ENCODE measurements at regions of chr16 and their contacts with region 1.

Region 1: GRCh38 chr16:75471723-75472633 is 7.5 kb upstream of the TMEM170A start:
- DNase-seq: no peak
- ATAC-seq: peak; percentile 94

Region 2: DNA sequence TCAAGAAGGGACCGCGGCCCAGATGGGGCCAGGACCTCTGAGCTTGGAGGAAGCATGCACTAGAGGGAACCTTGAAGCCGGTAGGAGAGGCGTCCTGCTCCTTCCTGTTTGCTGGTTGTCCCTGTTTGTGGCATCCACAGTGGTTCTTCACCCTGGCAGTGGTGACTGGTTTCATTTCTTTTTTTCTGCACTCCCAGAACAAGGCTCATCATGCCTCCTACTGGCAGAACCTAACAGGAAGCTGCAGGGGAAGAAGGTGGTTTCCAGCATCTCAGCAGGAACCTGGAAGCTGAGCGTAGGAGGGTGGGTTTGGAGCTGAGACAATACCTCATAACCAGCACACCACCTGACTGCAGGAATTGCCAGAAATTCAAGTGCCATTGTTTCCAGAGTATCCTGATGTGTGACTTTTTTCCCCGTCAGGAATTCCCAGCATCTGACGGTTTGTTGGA is 78.3 kb after region 1 on chr16:
- intact Hi-C with region 1: loop called (anchors 2 kb)
- DNase-seq: no peak
- ATAC-seq: peak; percentile 44

Region 3: DNA sequence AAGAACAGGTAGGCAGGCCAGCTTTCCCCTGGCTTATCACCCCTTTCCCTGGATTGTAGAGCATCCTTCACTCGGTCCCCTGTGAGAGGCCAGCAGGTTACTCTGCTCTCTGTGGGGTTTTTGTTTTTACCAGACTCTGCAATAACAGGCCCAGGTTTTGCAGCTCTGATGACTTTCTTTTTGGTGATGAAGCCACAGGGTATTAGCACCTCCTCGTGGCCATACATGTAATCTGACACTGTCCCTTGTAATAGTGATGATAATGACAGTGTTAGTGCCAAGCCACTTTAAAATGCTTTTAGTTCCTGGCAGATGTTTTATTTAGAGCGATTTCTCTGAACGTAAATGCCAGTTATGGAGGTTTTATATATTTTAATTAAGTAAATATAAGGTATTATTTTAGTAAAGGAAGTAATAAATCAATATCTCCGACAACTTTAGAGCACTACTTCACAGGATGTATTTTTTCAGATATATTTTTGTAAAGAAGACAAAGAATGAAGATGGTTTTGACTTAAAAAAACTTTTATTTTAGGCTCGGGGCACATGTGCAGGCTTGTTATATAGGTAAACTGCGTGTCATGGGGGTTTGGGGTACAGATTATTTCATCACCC is 292.3 kb after region 1 on chr16:
- intact Hi-C with region 1: loop called (anchors 1 kb)
- DNase-seq: no peak
- ATAC-seq: peak; percentile 84

Measured in Right ventricle myocardium inferior (tissue), 1 donor.